ENCODE measurements at regions of chr7 and their contacts with region 1.

Region 1: GRCh38 chr7:91288208-91288824 is 24.1 kb downstream of the FZD1 start:
- DNase-seq: peak; percentile 41
- H3K4me3 ChIP-seq: no peak overlapping the region
- H3K27ac ChIP-seq: no peak overlapping the region
- H3K4me1 ChIP-seq: no peaks in the 10 kb centered on the region
- H3K27me3 ChIP-seq: peaks cover 0 to 4% of the 10 kb centered on the region in 2 experiments
- CTCF ChIP-seq: peak; percentile 46 to 60
- POLR2A ChIP-seq: no peak

Region 2: DNA sequence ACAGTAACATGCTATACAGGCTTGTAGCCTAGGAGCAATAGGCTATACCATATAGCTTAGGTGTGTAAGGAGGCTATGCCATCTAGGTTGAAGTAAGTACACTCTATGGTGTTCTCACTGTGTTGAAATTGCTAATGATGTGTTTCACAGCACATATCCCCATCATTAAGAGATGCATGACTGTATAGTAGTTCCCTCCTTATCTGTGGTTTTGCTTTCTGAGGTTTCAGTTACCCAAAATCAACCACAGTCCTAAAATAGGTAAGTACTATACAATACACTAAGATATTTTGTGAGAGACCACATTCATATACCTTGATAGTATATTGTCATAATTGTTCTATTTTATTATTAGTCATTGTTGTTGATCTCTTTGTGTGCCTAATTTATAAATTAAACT is 11.4 kb before region 1 on chr7:
- CTCF ChIA-PET with region 1: interaction called, 11 read pairs
- POLR2A ChIA-PET with region 1: no interaction called
- dilution Hi-C with region 1: no loop called
- intact Hi-C with region 1: no loop called
- DNase-seq: no peak
- H3K4me3 ChIP-seq: no peak overlapping the region
- H3K27ac ChIP-seq: no peak overlapping the region
- H3K4me1 ChIP-seq: no peaks in the 10 kb centered on the region
- H3K27me3 ChIP-seq: no peaks in the 10 kb centered on the region
- CTCF ChIP-seq: no peak
- POLR2A ChIP-seq: no peak

Region 3: DNA sequence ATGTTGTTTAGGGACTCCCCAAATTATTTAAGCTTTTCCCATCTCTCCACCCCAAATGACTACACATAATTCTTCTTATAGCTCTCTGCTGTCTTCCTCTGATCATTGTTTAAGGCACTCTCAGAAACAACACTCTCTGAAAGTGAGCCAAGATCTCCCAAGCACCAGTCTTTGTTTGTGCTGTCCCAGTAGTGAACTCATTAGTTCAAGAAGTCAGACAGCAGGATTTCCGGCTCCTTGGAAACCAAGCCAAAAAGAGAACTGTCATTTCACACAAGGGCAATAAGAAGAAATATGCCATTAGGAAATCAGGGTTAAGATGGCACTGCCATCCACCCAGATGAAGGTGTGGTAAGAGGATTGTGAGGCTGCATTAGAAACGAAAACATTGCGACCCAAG is 59.0 kb after region 1 on chr7:
- CTCF ChIA-PET with region 1: interaction called, 4 read pairs
- POLR2A ChIA-PET with region 1: no interaction called
- dilution Hi-C with region 1: no loop called
- intact Hi-C with region 1: loop called (anchors 1 kb)
- DNase-seq: peak; percentile 93
- H3K4me3 ChIP-seq: no peak overlapping the region
- H3K27ac ChIP-seq: peak overlapping the region; percentile 73
- H3K4me1 ChIP-seq: peaks cover 55% of the 10 kb centered on the region
- H3K27me3 ChIP-seq: no peaks in the 10 kb centered on the region
- CTCF ChIP-seq: no peak
- POLR2A ChIP-seq: no peak

Region 4: DNA sequence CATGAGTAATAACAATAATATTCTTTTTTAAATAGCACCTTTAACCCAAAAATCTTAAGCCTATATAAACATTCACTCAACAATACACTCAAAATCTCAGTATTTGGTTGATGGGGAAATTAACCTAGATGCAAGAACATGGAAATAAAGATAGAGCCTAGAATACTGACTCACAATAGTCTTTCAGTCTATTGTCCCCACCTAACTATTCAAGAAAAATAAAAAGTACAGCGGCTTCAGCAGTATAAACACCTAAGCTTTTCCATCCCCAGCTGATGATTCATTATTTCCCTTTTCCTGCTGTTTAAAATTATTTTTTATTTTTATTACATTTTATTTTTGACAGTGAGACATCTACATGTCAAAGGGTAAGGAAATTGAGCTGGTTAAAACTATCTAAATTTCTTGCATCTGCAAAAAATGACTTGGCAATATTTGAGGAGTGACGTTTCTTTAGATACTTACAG is 177.3 kb after region 1 on chr7:
- CTCF ChIA-PET with region 1: interaction called, 5 read pairs
- POLR2A ChIA-PET with region 1: no interaction called
- dilution Hi-C with region 1: no loop called
- intact Hi-C with region 1: loop called (anchors 5 kb)
- DNase-seq: peak; percentile 93
- H3K4me3 ChIP-seq: no peak overlapping the region
- H3K27ac ChIP-seq: peak overlapping the region; percentile 75
- H3K4me1 ChIP-seq: peaks cover 25% of the 10 kb centered on the region
- H3K27me3 ChIP-seq: no peaks in the 10 kb centered on the region
- CTCF ChIP-seq: no peak
- POLR2A ChIP-seq: no peak

Region 5: GRCh38 chr7:91636129-91636724 is 347.9 kb after region 1 on chr7:
- CTCF ChIA-PET with region 1: interaction called, 25 read pairs
- POLR2A ChIA-PET with region 1: no interaction called
- dilution Hi-C with region 1: no loop called
- intact Hi-C with region 1: loop called (anchors 1 kb)
- DNase-seq: peak; percentile 57
- H3K4me3 ChIP-seq: no peak overlapping the region
- H3K27ac ChIP-seq: no peak overlapping the region
- H3K4me1 ChIP-seq: peaks cover 6% of the 10 kb centered on the region
- H3K27me3 ChIP-seq: peaks cover 0 to 3% of the 10 kb centered on the region in 2 experiments
- CTCF ChIP-seq: peak; percentile 58 to 65
- POLR2A ChIP-seq: no peak

Region 6: GRCh38 chr7:91784463-91784862 is 496.1 kb after region 1 on chr7:
- CTCF ChIA-PET with region 1: interaction called, 10 read pairs
- POLR2A ChIA-PET with region 1: no interaction called
- dilution Hi-C with region 1: no loop called
- intact Hi-C with region 1: loop called (anchors 1 kb)
- DNase-seq: peak; percentile 37
- H3K4me3 ChIP-seq: no peak overlapping the region
- H3K27ac ChIP-seq: no peak overlapping the region
- H3K4me1 ChIP-seq: no peaks in the 10 kb centered on the region
- H3K27me3 ChIP-seq: peaks cover 3 to 8% of the 10 kb centered on the region in 2 experiments
- CTCF ChIP-seq: peak in 1 of 2 donors; percentile 9
- POLR2A ChIP-seq: no peak

Measured in endothelial cell of umbilical vein (primary cell).